ENCODE measurements at regions of chr2 and their contacts with region 1.

Region 1: GRCh38 chr2:149587220-149587949 is at the start of gene MMADHC:
- DNase-seq: peak; percentile 97
- H3K4me3 ChIP-seq: peak within 1 kb of the TSS; percentile 74 to 82 (median 75)
- H3K27ac ChIP-seq: peak within 1 kb of the TSS; percentile 87 to 95 (median 94)
- H3K4me1 ChIP-seq: peaks cover 0 to 38% (median 27%) of the 10 kb centered on the region in 4 donors
- H3K27me3 ChIP-seq: no peaks in the 10 kb centered on the region
- CTCF ChIP-seq: no peak
- EP300 ChIP-seq: no peak
- POLR2A ChIP-seq: peak; percentile 68 to 76
- total RNA-seq, gene MMADHC: 77.8 to 172 (median 138) TPM

Region 2: GRCh38 chr2:150167711-150168110 is 580.3 kb after region 1 on chr2:
- intact Hi-C with region 1: loop called (anchors 5 kb)
- DNase-seq: no peak
- H3K4me3 ChIP-seq: no peak overlapping the region
- H3K27ac ChIP-seq: peak overlapping the region in 1 of 4 donors; percentile 60
- H3K4me1 ChIP-seq: peaks cover 0 to 49% (median 43%) of the 10 kb centered on the region in 4 donors
- H3K27me3 ChIP-seq: no peaks in the 10 kb centered on the region
- CTCF ChIP-seq: no peak
- EP300 ChIP-seq: no peak
- POLR2A ChIP-seq: no peak

Measured in sigmoid colon (tissue), 7 donors.